ENCODE measurements at regions of chr16 and their contacts with region 1.

Region 1: GRCh38 chr16:28549390-28549789 is 4.3 kb upstream of the SGF29 start:
- DNase-seq: peak; percentile 45 to 62
- ATAC-seq: peak; percentile 51 to 55; a peak in 3 of 6 replicates
- H3K4me3 ChIP-seq: no peak overlapping the region
- H3K27ac ChIP-seq: 0 out of 6 replicates have a peak overlapping the region, but pooled peaks of 1 of the 2 experiments have one; percentile 11
- H3K4me1 ChIP-seq: 0 out of 3 replicates have a peak, but pooled peaks cover 4% of the 10 kb centered on the region
- CTCF ChIP-seq: peak; percentile 79
- EP300 ChIP-seq: no peak
- POLR2A ChIP-seq: no peak
- RAD21 ChIP-seq: peak; percentile 86 to 94

Region 2: GRCh38 chr16:28241924-28242323 is 307.5 kb before region 1 on chr16:
- CTCF ChIA-PET with region 1: no interaction called
- POLR2A ChIA-PET with region 1: no interaction called
- DNase-seq: no peak
- ATAC-seq: no peak
- H3K4me3 ChIP-seq: no peak overlapping the region
- H3K27ac ChIP-seq: no peak overlapping the region
- H3K4me1 ChIP-seq: no peaks in the 10 kb centered on the region
- CTCF ChIP-seq: no peak
- EP300 ChIP-seq: no peak
- POLR2A ChIP-seq: no peak
- RAD21 ChIP-seq: no peak

Region 3: DNA sequence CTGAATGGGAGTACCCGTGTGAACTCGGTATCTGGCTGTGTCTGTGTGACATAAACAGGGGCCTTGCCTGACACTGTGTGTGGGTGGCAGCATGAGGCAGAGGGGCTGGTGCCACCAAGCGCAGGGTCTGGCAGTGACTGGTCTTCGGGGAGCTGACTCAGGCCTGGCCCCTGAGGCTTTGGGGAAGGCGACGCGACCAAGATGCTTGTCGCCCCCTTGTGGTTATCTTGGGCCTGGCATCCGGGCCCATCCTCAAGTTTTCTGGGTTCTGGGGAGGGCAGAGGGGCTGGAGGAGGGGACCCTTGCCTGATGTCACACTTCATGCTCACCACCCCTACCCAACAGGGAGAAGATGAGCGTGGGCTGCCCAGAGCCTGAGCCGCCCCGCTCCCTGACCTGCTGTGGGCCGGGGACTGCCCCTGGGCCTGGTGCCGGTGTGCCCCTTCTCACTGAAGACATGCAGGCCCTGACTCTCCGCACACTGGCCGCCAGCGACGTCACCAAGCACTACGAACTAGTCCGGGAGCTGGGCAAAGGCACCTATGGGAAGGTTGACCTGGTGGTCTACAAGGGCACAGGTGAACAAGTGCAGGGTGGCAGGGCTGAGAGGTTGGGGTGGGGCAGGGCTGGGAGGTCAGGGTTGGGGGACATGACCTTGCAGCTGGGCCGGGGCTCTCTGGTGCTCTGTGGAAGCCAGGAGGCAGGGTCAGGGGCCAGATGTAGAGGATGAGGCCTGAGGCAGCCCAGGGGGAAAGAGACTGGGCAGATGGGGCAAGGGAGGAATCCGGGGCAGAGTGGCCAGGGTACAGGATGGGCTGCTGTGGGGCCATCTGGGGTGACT is 232.1 kb before region 1 on chr16:
- CTCF ChIA-PET with region 1: interaction called, 11 read pairs
- POLR2A ChIA-PET with region 1: interaction called, 3 read pairs
- DNase-seq: peak; percentile 57 to 62
- ATAC-seq: peak; percentile 48 to 80; a peak in 5 of 6 replicates
- H3K4me3 ChIP-seq: no peak overlapping the region
- H3K27ac ChIP-seq: no peak overlapping the region
- H3K4me1 ChIP-seq: no peaks in the 10 kb centered on the region
- CTCF ChIP-seq: peak; percentile 80
- EP300 ChIP-seq: no peak
- POLR2A ChIP-seq: no peak
- RAD21 ChIP-seq: peak; percentile 72 to 74

Region 4: DNA sequence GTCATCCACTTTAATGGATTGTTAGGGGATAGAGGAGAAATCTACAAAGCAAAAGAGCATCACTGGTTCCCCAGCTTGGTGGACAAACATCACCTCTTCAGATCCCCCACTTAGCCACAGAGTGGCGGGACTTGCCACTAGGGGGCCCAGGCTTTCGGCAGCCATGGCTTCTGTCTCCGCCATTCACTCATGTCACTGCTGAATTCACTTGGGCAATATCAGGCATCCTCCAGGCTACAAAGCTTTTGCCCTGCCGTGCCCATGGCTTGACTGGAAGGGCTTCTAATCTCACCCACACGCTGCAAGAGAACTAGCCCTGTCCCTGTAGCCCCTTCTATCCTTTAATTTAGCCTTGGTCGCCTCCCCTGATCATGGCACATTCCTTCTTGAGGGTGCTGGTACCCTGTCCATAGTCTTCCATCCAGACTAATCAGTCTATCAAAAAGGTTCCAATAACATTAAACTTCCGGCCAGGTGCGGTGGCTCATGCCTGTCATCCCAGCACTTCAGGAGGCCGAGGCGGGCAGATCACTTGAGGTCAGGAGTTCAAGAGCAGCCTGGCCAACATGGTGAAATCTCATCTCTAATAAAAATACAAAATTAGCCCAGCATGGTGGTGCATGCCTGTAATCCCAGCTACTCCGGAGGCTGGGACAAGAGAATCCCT is 222.3 kb before region 1 on chr16:
- CTCF ChIA-PET with region 1: interaction called, 10 read pairs
- POLR2A ChIA-PET with region 1: no interaction called
- DNase-seq: peak; percentile 72 to 91
- ATAC-seq: peak; percentile 86 to 89
- H3K4me3 ChIP-seq: no peak overlapping the region
- H3K27ac ChIP-seq: no peak overlapping the region
- H3K4me1 ChIP-seq: peaks cover 10% of the 10 kb centered on the region; the same call in 2 of the 3 replicates
- CTCF ChIP-seq: peak; percentile 67
- EP300 ChIP-seq: no peak
- POLR2A ChIP-seq: no peak
- RAD21 ChIP-seq: peak; percentile 40 to 58

Measured in A549 (cell line).